CD4-positive, alpha-beta memory T cell (primary cell): ENCODE measurements at regions of chr19 and their contacts with region 1.

Region 1: DNA sequence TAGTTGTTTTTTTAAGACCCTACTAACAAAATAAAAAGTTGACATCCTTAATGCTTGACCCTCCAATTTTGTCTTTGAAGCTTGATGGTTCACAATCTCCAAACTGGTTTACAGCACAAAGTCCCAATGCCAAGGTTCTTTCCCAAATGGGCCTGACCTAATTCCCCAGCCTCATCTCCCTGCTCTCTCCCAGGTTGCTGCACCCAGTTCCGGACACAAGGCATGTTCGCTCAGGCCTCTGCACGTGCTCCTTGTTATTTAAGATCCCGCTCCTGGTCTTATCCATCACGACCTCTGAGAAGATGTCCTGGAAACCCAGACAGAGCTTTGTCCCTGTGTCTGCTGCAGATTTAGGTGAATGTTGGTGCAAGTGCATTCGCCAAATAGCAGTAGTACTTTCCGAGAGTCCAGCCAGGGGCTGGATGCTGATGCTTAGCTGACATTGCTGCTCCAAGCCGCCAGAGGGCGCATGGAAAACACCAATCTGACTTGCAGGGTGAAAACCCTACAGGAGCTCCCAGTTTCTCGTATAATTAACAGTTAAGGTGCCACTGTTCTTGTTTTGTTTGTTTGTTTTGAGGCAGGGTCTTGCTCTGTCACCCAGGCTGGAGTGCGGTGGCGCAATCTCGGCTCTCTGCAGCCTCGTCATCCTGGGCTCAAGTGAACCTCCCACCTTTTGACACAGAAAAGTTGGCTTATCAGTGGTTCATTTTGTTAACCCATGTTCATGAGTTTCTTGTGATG is 18.5 kb downstream of the LYPD3 start:
- DNase-seq: peak; percentile 74 to 81 (median 79)
- H3K4me3 ChIP-seq: no peak overlapping the region
- H3K4me3 Mint-ChIP-seq: peak overlapping the region in 2 of 8 donors; percentile 3 to 52
- H3K27ac ChIP-seq: no peak overlapping the region
- H3K27ac Mint-ChIP-seq: peak overlapping the region; percentile 54 to 93 (median 75)
- H3K4me1 ChIP-seq: peaks cover 16% of the 10 kb centered on the region
- H3K4me1 Mint-ChIP-seq: peaks cover 13 to 29% (median 20%) of the 10 kb centered on the region in 4 donors
- H3K27me3 ChIP-seq: no peaks in the 10 kb centered on the region
- H3K27me3 Mint-ChIP-seq: no peaks in the 10 kb centered on the region

Region 2: GRCh38 chr19:43433358-43433673 is 13.6 kb before region 1 on chr19:
- CTCF ChIA-PET with region 1: interaction called, 413 read pairs
- POLR2A ChIA-PET with region 1: interaction called, 36 read pairs
- intact Hi-C with region 1: loop called (anchors 1 kb)
- DNase-seq: no peak
- H3K4me3 ChIP-seq: no peak overlapping the region
- H3K4me3 Mint-ChIP-seq: no peak overlapping the region
- H3K27ac ChIP-seq: no peak overlapping the region
- H3K27ac Mint-ChIP-seq: peak overlapping the region in 5 of 7 donors; percentile 54 to 84 (median 68)
- H3K4me1 ChIP-seq: peaks cover 44% of the 10 kb centered on the region
- H3K4me1 Mint-ChIP-seq: peaks cover 38 to 43% (median 40%) of the 10 kb centered on the region in 4 donors
- H3K27me3 ChIP-seq: no peaks in the 10 kb centered on the region
- H3K27me3 Mint-ChIP-seq: no peaks in the 10 kb centered on the region

Region 3: DNA sequence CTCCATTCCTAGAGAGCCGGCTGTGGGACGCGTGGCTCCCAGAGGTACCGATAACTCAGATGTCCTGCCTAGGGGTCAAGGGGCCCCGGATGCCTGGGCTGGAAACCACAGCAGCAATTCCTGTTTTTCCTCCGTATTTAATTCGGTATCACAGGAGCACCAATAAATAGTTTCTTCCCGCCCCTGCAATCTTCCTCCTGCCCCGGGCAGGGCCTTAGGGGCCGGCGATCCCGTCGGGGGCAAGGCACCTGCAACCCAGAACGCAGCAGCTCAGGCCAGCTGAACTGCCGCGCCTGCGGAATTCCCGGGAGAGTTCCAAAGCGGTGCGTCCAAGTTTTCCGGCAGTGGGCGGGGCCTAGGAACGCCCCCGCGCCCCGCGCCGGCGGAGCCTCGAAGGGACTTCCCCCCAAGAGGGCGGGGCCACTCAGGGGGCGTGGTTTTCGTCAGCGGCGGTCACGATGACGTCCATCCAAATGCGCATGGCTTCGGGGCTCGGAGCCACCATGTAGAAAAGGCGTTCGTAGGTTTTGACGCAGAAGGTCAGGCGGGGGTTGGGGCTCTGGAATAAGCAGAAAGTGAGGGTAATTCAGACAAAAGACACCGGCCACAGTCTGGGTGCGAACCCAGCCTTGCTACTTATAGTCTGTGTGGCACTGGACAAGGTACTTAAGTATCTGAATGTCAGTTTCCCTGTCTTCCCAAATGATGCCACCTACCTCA is 28.2 kb after region 1 on chr19:
- CTCF ChIA-PET with region 1: interaction called, 10 read pairs
- POLR2A ChIA-PET with region 1: interaction called, 6 read pairs
- intact Hi-C with region 1: no loop called
- DNase-seq: peak; percentile 94 to 97 (median 95)
- H3K4me3 ChIP-seq: peak overlapping the region; percentile 26 to 53
- H3K4me3 Mint-ChIP-seq: peak overlapping the region; percentile 77 to 90 (median 86)
- H3K27ac ChIP-seq: peak overlapping the region; percentile 58
- H3K27ac Mint-ChIP-seq: peak overlapping the region; percentile 80 to 100 (median 99)
- H3K4me1 ChIP-seq: peaks cover 18% of the 10 kb centered on the region
- H3K4me1 Mint-ChIP-seq: peaks cover 12 to 31% (median 19%) of the 10 kb centered on the region in 4 donors
- H3K27me3 ChIP-seq: no peaks in the 10 kb centered on the region
- H3K27me3 Mint-ChIP-seq: no peaks in the 10 kb centered on the region

Region 4: GRCh38 chr19:43519436-43520088 is 72.6 kb after region 1 on chr19:
- CTCF ChIA-PET with region 1: interaction called, 835 read pairs
- POLR2A ChIA-PET with region 1: interaction called, 69 read pairs
- intact Hi-C with region 1: loop called (anchors 1 kb)
- DNase-seq: peak; percentile 75 to 79 (median 78)
- H3K4me3 ChIP-seq: no peak overlapping the region
- H3K4me3 Mint-ChIP-seq: peak overlapping the region in 3 of 8 donors; percentile 2 to 13 (median 9)
- H3K27ac ChIP-seq: no peak overlapping the region
- H3K27ac Mint-ChIP-seq: peak overlapping the region in 6 of 7 donors; percentile 14 to 82 (median 41)
- H3K4me1 ChIP-seq: peaks cover 11% of the 10 kb centered on the region
- H3K4me1 Mint-ChIP-seq: peaks cover 13 to 14% (median 13%) of the 10 kb centered on the region in 4 donors
- H3K27me3 ChIP-seq: no peaks in the 10 kb centered on the region
- H3K27me3 Mint-ChIP-seq: no peaks in the 10 kb centered on the region

Region 5: GRCh38 chr19:43555185-43555770 is 108.4 kb after region 1 on chr19:
- CTCF ChIA-PET with region 1: interaction called, 25 read pairs
- POLR2A ChIA-PET with region 1: no interaction called
- intact Hi-C with region 1: no loop called
- DNase-seq: peak; percentile 81 to 85 (median 82)
- H3K4me3 ChIP-seq: no peak overlapping the region
- H3K4me3 Mint-ChIP-seq: peak overlapping the region in 2 of 8 donors; percentile 31 to 52
- H3K27ac ChIP-seq: no peak overlapping the region
- H3K27ac Mint-ChIP-seq: peak overlapping the region; percentile 6 to 85 (median 77)
- H3K4me1 ChIP-seq: peaks cover 7% of the 10 kb centered on the region
- H3K4me1 Mint-ChIP-seq: peaks cover 10 to 19% (median 12%) of the 10 kb centered on the region in 4 donors
- H3K27me3 ChIP-seq: no peaks in the 10 kb centered on the region
- H3K27me3 Mint-ChIP-seq: no peaks in the 10 kb centered on the region

Region 6: GRCh38 chr19:43784981-43785808 is 338.3 kb after region 1 on chr19:
- CTCF ChIA-PET with region 1: no interaction called
- POLR2A ChIA-PET with region 1: no interaction called
- intact Hi-C with region 1: loop called (anchors 5 kb)
- DNase-seq: peak; percentile 59 to 72 (median 62)
- H3K4me3 ChIP-seq: no peak overlapping the region
- H3K4me3 Mint-ChIP-seq: peak overlapping the region in 7 of 8 donors; percentile 73 to 84 (median 79)
- H3K27ac ChIP-seq: peak overlapping the region; percentile 46
- H3K27ac Mint-ChIP-seq: peak overlapping the region; percentile 77 to 96 (median 93)
- H3K4me1 ChIP-seq: peaks cover 47% of the 10 kb centered on the region
- H3K4me1 Mint-ChIP-seq: peaks cover 30 to 52% (median 37%) of the 10 kb centered on the region in 4 donors
- H3K27me3 ChIP-seq: no peaks in the 10 kb centered on the region
- H3K27me3 Mint-ChIP-seq: peaks cover 0 to 2% of the 10 kb centered on the region in 2 donors